Head of caudate nucleus (tissue), 42 donors: ENCODE measurements at regions of chr19 and their contacts with region 1.

Region 1: GRCh38 chr19:46860125-46860845 is 512 bp upstream of the ARHGAP35 start:
- DNase-seq: peak; percentile 95 to 99 (median 98)

Region 2: GRCh38 chr19:46748325-46749109 is 111.8 kb before region 1 on chr19:
- intact Hi-C with region 1: no loop called
- DNase-seq: peak in 31 of 42 donors; percentile 43 to 87 (median 69)

Region 3: DNA sequence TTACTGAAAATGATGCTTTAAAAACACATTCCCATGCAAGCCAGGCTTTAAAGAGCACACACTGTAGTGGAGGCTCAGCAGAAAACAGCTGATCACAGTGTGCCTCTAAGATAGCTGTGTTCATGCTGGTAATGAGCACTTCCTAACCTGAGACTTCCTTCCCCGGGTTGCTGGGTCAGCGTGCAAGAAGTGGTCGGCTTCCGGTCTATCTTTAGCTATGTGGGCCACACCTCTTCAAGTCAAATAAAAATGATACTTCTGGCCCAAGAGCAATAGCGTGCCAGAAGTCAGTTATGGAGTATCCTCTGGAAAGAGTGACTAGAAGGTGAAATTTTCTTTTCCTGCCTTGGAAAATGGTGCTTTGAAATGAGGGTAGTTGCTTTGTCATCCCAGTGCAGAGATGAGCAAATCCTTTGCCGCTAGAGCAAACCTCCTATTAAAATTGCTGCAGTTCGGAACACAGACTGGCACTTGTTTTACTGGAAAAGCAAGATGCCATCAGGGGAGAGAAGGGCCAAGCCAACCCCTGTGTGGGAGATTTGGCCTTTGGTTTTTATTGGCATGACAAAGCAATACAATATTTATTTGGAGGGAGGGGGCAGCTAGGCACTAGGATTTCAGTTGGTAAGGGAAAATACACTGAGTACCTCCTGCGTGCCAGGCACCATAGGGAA is 64.7 kb after region 1 on chr19:
- intact Hi-C with region 1: loop called (anchors 5 kb)
- DNase-seq: peak in 3 of 42 donors; percentile 8 to 44 (median 41)

Region 4: DNA sequence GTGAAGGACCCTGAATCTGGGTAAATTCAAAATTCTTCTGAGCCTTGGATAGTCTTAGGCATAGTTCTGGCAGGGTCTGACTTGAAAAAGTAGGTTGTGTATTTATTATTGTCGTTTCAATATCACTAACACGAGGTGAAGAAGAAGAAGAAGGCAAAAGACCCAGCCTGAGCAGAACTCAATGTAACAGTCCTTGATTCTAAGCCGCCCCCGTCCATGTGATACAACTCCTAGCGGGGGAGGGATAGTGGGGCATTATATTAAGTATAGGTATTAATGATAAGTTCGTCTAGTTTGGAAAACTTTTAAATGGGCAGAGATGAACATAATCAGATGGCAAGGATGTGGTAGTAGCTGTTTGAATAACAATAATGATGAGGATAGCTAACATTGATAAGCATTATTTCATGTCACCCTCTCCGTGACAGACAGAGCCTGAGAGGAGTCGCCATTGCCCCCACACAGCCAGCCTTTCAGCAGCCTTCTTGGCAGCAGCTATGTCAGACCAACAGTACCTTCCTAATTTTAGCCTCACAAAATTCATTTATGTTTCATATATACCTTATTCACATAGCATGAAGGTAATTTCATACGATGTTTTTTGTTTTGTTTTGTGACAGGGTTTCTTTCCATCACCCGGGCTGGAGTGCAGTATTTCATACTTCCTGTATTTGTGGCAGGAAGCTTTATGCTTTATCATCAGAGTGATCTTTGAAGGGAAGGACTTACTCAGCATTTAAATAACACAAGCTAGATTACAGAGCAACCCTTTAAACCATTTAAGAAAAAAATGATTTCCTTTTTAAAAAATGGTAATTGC is 94.9 kb after region 1 on chr19:
- intact Hi-C with region 1: no loop called
- DNase-seq: no peak

Region 5: DNA sequence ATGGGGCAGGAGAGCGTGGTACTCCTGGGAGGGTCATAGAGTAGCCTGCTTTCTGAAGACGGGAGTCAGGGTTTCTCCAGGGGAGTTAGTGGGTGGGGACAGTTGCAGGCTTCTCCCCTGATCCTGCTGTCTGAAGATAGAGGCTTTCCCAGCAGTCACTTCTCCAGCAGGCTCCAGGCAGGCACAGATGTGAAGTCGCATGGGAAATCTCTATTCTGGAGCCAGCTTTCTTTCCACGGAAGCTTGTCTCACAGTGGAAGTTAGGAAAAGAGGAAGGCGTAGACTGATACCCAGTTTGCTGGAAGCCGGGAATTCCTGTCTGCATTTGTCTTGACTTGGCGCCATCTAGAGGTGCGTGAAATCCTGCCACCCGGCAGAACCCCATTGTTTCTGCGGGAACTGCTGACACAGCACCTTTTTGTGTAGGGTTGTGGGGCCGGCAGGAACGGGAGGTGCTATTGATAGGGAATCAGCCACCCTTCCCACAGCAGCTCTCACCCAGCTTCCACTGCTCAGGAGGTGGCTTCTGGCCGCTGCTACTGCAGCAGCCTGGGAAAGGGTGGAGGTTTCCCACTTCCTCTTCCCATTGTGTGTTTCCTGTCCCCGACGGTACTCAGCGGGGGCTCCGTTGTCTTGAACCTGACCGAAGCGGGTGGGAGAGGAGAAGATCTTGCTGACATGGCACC is 130.8 kb after region 1 on chr19:
- intact Hi-C with region 1: loop called (anchors 1 kb)
- DNase-seq: peak; percentile 77 to 96 (median 90)

Region 6: DNA sequence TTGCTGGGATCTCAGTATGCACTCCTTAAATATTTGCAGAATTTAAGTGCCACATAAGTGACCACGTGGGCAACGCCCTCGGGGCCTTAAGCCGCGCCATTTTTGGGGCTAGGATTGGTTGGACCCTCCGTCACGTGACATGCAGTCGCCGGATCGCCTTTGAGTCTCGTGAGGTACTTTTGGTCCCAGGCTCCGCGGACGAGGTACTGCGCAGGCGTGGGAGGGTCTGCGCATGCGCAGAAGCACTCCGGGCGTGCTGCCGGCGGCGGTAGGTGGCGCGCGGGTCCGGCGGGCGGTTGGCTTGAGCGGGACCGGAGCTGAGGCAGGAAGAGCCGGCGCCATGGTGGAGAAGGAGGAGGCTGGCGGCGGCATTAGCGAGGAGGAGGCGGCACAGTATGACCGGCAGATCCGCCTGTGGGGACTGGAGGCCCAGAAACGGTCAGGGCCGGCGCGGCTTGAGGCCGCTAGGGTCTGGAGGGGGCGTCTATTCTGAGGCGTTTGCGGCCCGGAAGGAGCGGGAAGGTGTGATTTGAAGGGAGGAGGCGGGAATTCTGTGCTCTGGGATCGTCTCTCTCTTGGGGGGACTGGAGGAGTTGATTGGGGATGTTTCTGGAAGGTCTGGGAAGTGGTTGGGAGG is 270.4 kb after region 1 on chr19 and contains the start of gene SAE1:
- intact Hi-C with region 1: loop called (anchors 10 kb)
- DNase-seq: peak; percentile 77 to 95 (median 89)